AG04449 (cell line): ENCODE measurements at regions of chr13 and their contacts with region 1.

Region 1: DNA sequence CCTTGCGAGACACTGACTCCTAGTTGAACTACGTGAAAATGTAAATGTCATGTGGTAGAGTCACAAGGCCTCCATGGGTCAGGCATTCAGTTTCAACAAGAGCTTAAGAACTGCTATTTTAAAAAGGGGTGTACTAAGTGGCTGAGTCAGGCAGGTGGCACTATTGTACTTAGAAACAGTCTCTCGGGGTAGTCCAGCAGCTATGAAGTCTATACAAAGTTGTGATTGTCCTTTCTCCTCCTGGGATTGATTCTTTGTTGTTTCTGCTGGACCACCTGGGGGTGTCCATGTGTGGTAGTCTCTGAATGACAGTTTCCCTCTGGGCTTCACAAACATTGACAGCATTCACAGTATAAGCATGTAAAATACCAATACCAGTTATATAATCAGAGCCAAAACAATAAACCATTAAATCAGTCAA is 33.0 kb downstream of the UGGT2 start:
- DNase-seq: peak; percentile 31
- H3K4me3 ChIP-seq: no peak overlapping the region
- CTCF ChIP-seq: peak; percentile 45

Region 2: GRCh38 chr13:95704510-95704909 is 315.7 kb before region 1 on chr13:
- CTCF ChIA-PET with region 1: no interaction called
- POLR2A ChIA-PET with region 1: no interaction called
- DNase-seq: no peak
- H3K4me3 ChIP-seq: no peak overlapping the region
- CTCF ChIP-seq: no peak

Region 3: GRCh38 chr13:96034662-96035061 is 14.5 kb after region 1 on chr13:
- CTCF ChIA-PET with region 1: interaction called, 12 read pairs
- POLR2A ChIA-PET with region 1: no interaction called
- DNase-seq: no peak
- H3K4me3 ChIP-seq: no peak overlapping the region
- CTCF ChIP-seq: no peak

Region 4: DNA sequence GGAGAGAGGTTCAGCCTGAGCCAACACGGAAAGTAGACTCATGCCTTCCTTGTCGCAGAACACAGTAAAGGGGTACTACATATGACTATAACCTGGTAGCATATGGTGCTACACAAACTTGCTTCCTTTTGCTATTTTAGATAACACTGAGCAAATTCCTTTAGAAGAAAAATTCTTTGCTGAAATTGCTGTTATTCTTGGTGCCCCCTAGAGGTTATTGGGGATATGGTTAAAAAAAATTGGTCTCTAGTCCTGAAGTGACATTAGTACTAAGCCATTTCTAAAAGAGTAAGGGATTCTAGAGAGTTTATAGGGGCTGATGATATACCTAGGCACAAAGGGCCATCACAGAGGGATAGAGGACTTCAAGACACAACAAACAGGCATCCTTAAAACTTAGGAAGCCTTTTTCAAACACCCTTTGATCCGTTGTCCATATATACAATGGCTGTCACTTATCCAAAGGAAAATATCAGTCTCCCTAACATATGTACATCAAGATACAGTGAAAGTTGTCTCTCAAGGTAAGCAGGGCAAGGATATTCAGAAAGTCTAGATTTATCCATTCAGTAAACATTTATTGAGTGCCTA is 55.9 kb after region 1 on chr13:
- CTCF ChIA-PET with region 1: interaction called, 10 read pairs
- POLR2A ChIA-PET with region 1: no interaction called
- DNase-seq: no peak
- H3K4me3 ChIP-seq: no peak overlapping the region
- CTCF ChIP-seq: peak; percentile 35

Region 5: DNA sequence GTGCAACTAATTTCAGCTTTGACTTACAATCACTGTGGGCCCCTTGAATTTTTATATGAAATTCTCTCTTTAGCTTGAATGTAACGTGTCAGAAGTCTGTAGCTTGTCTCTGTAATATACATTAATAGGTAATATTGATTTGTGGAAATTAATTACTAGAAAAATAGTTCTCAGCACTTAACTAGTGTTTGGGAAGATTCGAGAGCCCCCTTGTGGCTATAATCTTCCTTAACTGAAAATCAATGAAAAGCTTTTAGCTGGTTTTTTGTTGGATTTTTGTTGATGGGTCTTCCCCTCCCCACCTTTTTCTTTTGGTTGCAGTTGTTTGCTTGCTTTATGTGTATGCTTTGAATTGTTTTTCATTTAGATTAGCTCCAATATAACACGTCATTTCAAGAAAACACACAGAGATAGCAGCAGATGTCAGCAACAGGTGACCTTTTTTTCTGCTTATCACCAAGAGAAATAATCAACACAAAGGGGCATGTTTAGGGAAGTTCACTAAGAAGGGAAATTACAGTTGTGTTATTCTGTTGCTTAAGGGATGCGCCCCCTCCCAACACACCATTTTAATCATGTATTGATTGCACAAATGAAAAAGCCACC is 797.3 kb after region 1 on chr13:
- CTCF ChIA-PET with region 1: interaction called, 23 read pairs
- POLR2A ChIA-PET with region 1: no interaction called
- DNase-seq: no peak
- H3K4me3 ChIP-seq: no peak overlapping the region
- CTCF ChIP-seq: peak; percentile 9

Region 6: GRCh38 chr13:96958286-96958891 is 938.2 kb after region 1 on chr13:
- CTCF ChIA-PET with region 1: interaction called, 12 read pairs
- POLR2A ChIA-PET with region 1: no interaction called
- DNase-seq: no peak
- H3K4me3 ChIP-seq: no peak overlapping the region
- CTCF ChIP-seq: peak; percentile 47